ENCODE measurements at regions of chr18 and their contacts with region 1.

Region 1: GRCh38 chr18:12308386-12309100 is 502 bp downstream of the TUBB6 start:
- DNase-seq: peak; percentile 88 to 90
- H3K4me3 ChIP-seq: peak overlapping the region; percentile 67 to 73
- H3K27ac ChIP-seq: peak overlapping the region; percentile 97 to 99
- H3K4me1 ChIP-seq: peaks cover 0 to 14% of the 10 kb centered on the region in 2 donors
- H3K27me3 ChIP-seq: no peaks in the 10 kb centered on the region
- CTCF ChIP-seq: no peak
- POLR2A ChIP-seq: peak; percentile 46 to 66

Region 2: DNA sequence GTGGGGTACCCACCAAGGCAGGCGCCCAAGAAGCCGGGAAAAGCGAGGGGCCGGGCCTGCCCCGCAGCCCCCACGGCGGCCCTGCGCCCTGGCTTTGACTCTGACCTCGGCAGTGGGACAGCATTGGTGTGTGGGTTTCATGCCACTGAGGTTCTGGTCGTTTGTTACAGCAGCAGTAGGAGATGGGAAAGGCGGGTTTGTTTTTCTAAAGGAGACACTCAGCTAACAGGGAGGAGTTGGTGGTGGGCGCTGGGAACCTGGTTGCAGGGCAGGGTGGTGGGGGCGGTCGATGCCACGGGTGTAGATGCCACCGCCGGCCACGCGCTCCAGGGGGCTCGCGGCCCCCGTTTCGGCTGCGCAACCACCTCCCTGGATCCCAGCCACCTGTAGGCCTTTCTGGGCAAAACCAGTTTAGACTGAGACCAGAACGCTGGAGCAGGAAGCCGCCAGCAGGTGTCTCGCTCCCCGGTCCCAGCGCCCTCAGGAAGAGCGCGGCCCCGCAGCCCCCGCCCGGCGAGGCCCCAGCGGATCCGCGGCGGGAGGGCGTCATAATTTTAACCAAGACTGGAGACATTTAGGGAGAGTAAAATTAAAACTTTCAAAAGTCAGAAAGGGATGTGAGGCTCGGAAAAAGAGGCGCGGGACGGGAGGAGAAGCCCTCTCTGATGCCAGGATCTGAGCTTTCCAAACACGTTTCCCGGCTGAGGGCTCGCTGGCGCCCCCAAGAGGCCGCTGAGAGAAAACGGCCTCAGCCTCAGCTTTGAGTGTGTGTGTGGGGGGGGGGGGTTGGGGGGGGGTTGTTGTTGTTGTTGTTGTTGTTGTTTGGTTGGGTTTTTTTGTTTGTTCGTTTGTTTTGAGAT is 36.9 kb before region 1 on chr18:
- intact Hi-C with region 1: loop called (anchors 5 kb)
- DNase-seq: peak; percentile 79
- H3K4me3 ChIP-seq: peak overlapping the region; percentile 32 to 41
- H3K27ac ChIP-seq: peak overlapping the region; percentile 78 to 79
- H3K4me1 ChIP-seq: peaks cover 0 to under 1% of the 10 kb centered on the region in 2 donors
- H3K27me3 ChIP-seq: no peaks in the 10 kb centered on the region
- CTCF ChIP-seq: peak; percentile 69 to 88 (median 80)
- POLR2A ChIP-seq: peak; percentile 9 to 25

Region 3: GRCh38 chr18:12373116-12373770 is 64.7 kb after region 1 on chr18:
- intact Hi-C with region 1: no loop called
- DNase-seq: no peak
- H3K4me3 ChIP-seq: no peak overlapping the region
- H3K27ac ChIP-seq: no peak overlapping the region
- H3K4me1 ChIP-seq: no peaks in the 10 kb centered on the region
- H3K27me3 ChIP-seq: no peaks in the 10 kb centered on the region
- CTCF ChIP-seq: no peak
- POLR2A ChIP-seq: no peak